Heart left ventricle (tissue), 16 donors: ENCODE measurements at regions of chr4 and their contacts with region 1.

Region 1: DNA sequence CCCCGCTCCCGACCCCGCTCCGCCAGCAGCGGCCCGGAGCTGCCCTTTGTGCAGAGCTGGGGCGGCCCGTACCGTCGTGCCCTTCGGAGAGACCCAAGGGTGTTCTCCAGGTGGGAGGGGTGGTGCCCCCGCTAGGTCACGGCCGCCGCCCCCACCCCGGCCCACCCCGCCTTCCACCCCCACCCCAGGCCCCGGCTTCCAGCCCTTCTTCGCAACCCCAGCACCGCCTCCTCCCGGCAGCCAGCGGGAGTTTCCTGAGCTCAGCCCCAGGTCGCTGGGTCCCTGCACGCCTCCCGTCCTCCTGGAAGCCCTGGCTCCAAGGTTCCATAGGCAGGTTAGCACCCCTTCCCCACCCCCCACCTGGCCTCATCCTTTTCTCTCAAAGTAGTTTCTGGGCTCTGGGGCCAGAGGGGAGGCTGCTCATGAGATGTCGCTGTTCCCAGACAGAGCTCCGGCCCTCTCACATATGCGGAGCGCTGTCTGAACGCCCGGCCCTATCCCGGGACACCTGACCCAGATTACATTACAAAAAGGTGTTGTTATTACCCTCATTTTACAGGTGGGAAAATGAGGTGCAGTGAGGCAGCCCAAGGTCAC is 25.2 kb upstream of the FGFR3 start:
- DNase-seq: no peak
- ATAC-seq: no peak
- H3K4me3 ChIP-seq: peak overlapping the region in 11 of 12 donors; percentile 16 to 57 (median 51)
- H3K27ac ChIP-seq: no peak overlapping the region
- H3K4me1 ChIP-seq: peaks cover 0 to 25% (median 9%) of the 10 kb centered on the region in 12 donors
- H3K27me3 ChIP-seq: peaks cover 0 to 42% (median 0%) of the 10 kb centered on the region in 9 donors
- CTCF ChIP-seq: peak in 2 of 12 donors; percentile 16 to 18
- POLR2A ChIP-seq: no peak

Region 2: DNA sequence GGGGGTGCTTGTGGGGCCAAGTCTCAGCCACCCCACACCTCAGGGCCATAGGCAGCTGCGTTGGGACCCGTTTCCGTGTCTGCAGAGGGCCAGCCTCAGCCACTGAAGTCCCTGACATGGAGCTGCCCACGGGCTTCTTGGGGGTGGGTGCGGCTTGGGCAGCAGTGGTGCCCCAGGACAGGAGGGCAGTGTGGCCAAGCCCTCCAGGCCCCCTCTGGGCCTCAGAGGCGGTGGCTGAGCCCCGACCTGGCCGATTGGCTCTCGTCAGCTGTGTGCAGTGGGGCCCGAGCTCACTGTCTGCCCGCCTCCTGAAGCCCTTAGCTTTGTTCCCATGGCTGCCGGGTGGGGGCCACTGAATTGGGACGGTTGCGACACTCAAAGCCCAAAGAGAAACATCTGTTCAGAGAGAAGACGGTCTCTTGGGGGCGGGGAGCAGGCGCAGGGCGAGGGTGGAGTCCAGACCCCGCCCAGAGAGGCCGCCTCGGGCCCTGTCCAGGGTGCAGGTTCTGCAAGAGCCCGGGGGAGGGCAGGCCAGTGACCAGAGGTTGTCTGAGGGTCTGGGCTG is 34.4 kb after region 1 on chr4:
- intact Hi-C with region 1: loop called in 1 of 10 experiments (anchors 5 kb)
- DNase-seq: peak in 2 of 5 donors; percentile 61 to 69
- ATAC-seq: peak in 3 of 4 donors; percentile 6 to 67 (median 43)
- H3K4me3 ChIP-seq: no peak overlapping the region
- H3K27ac ChIP-seq: no peak overlapping the region
- H3K4me1 ChIP-seq: no peaks in the 10 kb centered on the region
- H3K27me3 ChIP-seq: peaks cover 0 to 9% (median 0%) of the 10 kb centered on the region in 9 donors
- CTCF ChIP-seq: no peak
- POLR2A ChIP-seq: no peak

Region 3: DNA sequence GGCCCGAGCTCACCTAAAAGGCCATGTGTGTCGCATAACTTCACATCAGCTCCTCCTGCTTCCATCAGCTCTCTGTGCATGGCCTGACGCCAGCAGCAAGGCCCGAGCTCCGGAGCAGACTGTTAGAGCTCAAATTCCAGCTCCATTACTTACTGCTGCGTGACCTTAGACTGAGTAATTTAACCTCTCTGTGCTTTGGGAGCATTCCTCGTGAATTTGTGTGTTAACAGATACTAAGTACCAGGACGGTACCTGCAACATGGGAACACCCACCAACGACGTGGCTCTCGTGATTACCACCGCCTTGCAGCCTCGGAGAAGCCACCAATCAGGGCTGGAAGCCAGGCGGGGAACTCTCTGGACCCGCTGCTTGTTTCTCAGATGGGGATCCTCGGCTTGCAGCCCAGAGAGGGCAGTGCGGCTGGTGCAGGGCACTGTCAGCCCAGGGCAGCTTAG is 75.2 kb after region 1 on chr4:
- intact Hi-C with region 1: loop called in 1 of 10 experiments (anchors 2 kb)
- DNase-seq: peak in 2 of 5 donors; percentile 55 to 56
- ATAC-seq: peak; percentile 51 to 73 (median 58)
- H3K4me3 ChIP-seq: no peak overlapping the region
- H3K27ac ChIP-seq: peak overlapping the region in 10 of 12 donors; percentile 26 to 69 (median 50)
- H3K4me1 ChIP-seq: peaks cover 0 to 28% (median 16%) of the 10 kb centered on the region in 12 donors
- H3K27me3 ChIP-seq: no peaks in the 10 kb centered on the region
- CTCF ChIP-seq: no peak
- POLR2A ChIP-seq: no peak